Sigmoid colon (tissue), 7 donors: ENCODE measurements at regions of chr4 and their contacts with region 1.

Region 1: GRCh38 chr4:20544645-20545044 is 155.6 kb upstream of the PACRGL start:
- DNase-seq: no peak
- H3K4me3 ChIP-seq: no peak overlapping the region
- H3K27ac ChIP-seq: no peak overlapping the region
- H3K4me1 ChIP-seq: peaks cover 0 to 3% (median 0%) of the 10 kb centered on the region in 4 donors
- H3K27me3 ChIP-seq: no peaks in the 10 kb centered on the region
- CTCF ChIP-seq: peak; percentile 36 to 61 (median 53)
- EP300 ChIP-seq: no peak
- POLR2A ChIP-seq: no peak

Region 2: GRCh38 chr4:19224820-19225219 is 1319.8 kb before region 1 on chr4:
- intact Hi-C with region 1: loop called (anchors 10 kb)
- DNase-seq: no peak
- H3K4me3 ChIP-seq: no peak overlapping the region
- H3K27ac ChIP-seq: no peak overlapping the region
- H3K4me1 ChIP-seq: no peaks in the 10 kb centered on the region
- H3K27me3 ChIP-seq: no peaks in the 10 kb centered on the region
- CTCF ChIP-seq: peak in 1 of 4 experiments; percentile 45
- EP300 ChIP-seq: no peak
- POLR2A ChIP-seq: no peak

Region 3: DNA sequence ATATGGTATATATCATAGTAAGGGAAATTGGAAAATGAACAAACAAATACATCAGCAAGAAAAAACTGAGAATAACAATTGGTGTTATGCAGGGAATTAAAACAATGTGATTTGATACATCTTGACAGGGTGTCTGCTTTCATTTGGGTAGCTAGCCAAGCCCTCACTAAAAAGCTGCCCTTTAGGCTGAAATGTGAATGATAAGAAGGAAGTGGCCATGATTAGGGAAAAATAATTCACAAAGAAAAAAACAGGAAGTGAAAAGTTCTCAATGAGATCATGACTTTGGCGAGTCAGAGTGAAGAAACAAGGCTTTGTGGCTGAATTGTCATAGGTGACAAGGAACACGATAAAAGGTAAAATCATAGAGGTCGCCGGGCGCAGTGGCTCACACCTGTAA is 968.7 kb before region 1 on chr4:
- intact Hi-C with region 1: no loop called
- DNase-seq: no peak
- H3K4me3 ChIP-seq: no peak overlapping the region
- H3K27ac ChIP-seq: no peak overlapping the region
- H3K4me1 ChIP-seq: peaks cover 0 to 37% (median 11%) of the 10 kb centered on the region in 4 donors
- H3K27me3 ChIP-seq: no peaks in the 10 kb centered on the region
- CTCF ChIP-seq: no peak
- EP300 ChIP-seq: no peak
- POLR2A ChIP-seq: no peak

Region 4: DNA sequence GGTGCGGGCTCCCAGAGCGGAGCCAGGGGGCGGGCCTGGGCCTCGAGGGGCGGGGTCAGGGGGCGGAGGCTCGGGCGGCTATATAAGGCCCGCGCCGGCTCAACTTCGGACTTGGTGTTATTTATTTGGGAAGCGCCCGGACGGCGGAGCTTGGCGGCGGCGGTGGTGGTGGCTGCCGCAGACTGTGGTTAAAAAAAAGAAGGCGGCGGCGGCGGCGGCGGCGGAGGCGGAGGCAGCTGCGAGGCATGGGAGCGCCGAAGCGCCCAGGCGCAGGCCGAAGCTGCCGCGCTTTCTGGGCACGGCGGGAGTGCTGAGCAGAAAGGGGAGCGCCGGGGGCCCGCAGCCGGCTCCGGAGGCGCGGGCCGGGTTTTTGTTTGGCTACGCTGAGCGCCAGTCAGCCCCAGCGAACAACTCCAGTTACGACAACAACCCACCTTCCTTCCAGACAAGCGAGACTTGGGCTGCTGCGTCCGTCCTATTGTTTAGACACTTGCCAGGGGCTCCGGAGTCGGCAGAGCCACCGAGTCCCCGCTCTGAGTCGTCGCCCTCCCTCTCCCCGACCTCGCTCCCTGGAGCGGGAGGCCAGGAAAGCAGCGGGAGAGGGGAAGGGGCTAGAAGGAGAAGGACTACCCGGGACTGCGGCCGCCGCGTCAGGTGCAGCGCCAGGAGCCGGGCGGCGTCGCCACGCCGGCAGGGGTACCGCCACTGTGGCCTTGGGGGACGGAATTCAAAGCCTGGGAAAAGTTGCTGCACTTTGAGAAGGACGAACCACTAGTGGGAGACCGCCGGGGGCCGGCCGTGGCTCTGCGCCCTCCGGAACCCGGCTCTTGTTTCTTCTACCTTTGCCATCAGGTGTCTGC is 292.6 kb before region 1 on chr4 and contains the start of gene SLIT2:
- intact Hi-C with region 1: loop called (anchors 10 kb)
- DNase-seq: peak; percentile 95
- H3K4me3 ChIP-seq: peak within 1 kb of the TSS; percentile 54 to 74 (median 72)
- H3K27ac ChIP-seq: peak within 1 kb of the TSS; percentile 68 to 84 (median 79)
- H3K4me1 ChIP-seq: peaks cover 0 to 45% (median 26%) of the 10 kb centered on the region in 4 donors
- H3K27me3 ChIP-seq: peaks cover 0 to 40% (median 5%) of the 10 kb centered on the region in 3 donors
- CTCF ChIP-seq: no peak
- EP300 ChIP-seq: no peak
- POLR2A ChIP-seq: peak; percentile 60 to 67
- total RNA-seq, gene SLIT2: 27.0 to 49.0 (median 34.9) TPM

Region 5: DNA sequence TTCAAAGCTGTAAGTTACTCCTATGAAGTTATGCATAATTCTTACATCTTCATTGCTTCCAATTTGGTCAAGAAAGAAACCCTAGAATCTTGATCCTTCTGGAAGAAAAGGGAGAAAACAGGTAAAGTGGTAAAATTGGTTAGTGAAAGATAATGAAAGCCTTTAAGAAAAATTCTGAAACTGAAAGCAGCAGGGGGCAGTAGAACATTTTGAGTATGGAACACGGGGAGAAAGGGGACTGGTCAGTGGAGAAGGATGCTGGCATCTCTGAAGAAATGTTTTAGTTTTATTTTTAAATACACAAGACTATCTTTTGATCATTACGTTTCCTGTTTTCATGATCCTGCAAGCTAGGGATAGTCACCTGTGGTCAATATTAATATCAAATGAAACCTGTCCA is 238.7 kb before region 1 on chr4:
- intact Hi-C with region 1: loop called (anchors 10 kb)
- DNase-seq: no peak
- H3K4me3 ChIP-seq: no peak overlapping the region
- H3K27ac ChIP-seq: no peak overlapping the region
- H3K4me1 ChIP-seq: no peaks in the 10 kb centered on the region
- H3K27me3 ChIP-seq: no peaks in the 10 kb centered on the region
- CTCF ChIP-seq: no peak
- EP300 ChIP-seq: no peak
- POLR2A ChIP-seq: no peak

Region 6: DNA sequence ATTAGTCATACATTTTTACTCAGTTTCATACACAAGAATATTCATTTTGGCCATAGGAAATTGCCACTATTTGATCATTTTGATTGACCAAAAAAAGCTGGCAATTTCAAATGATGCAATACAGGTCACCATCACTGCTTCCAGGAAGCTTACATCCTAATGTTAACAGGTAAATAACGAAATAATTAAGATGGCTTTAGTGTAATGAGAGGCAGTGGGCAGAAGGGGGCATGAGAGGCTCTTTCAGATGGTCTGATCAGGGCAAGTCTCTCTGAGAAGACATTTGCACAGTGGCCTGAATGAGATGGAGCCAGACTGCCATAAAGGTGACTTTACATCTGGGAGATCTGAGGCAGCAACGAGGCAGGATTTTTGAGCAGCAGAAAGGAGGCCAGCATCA is 122.2 kb before region 1 on chr4:
- intact Hi-C with region 1: loop called (anchors 2 kb)
- DNase-seq: peak; percentile 67
- H3K4me3 ChIP-seq: no peak overlapping the region
- H3K27ac ChIP-seq: no peak overlapping the region
- H3K4me1 ChIP-seq: peaks cover 0 to 29% (median 4%) of the 10 kb centered on the region in 4 donors
- H3K27me3 ChIP-seq: no peaks in the 10 kb centered on the region
- CTCF ChIP-seq: peak; percentile 26 to 69 (median 61)
- EP300 ChIP-seq: no peak
- POLR2A ChIP-seq: no peak

Region 7: DNA sequence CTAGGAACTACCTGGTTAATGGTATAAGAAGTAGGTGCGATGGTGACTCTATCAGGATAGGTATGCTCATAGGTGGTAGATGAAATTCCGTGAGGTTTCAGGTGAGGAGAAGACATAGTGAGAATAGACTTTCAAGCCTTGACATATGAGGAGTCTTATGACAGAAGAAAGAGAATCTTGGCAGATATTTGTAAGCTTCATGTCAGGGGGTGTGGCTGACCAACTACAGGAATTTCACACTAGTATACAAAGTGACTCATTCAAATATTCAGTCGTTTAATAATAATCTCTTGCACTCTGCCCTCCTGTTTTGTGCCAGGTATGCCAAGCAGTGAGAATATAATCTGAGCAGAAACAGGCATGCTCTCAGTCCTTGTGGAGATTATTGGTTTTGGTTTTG is 178.4 kb after region 1 on chr4:
- intact Hi-C with region 1: no loop called
- DNase-seq: no peak
- H3K4me3 ChIP-seq: no peak overlapping the region
- H3K27ac ChIP-seq: no peak overlapping the region
- H3K4me1 ChIP-seq: no peaks in the 10 kb centered on the region
- H3K27me3 ChIP-seq: no peaks in the 10 kb centered on the region
- CTCF ChIP-seq: no peak
- EP300 ChIP-seq: no peak
- POLR2A ChIP-seq: no peak